Psoas muscle (tissue), 8 donors: ENCODE measurements at regions of chr6 and their contacts with region 1.

Region 1: GRCh38 chr6:138588805-138589434 is 89.6 kb upstream of the NHSL1 start:
- DNase-seq: peak in 1 of 2 donors; percentile 28
- ATAC-seq: peak; percentile 62 to 85 (median 70)
- H3K4me3 ChIP-seq: no peak overlapping the region
- H3K27ac ChIP-seq: no peak overlapping the region
- H3K4me1 ChIP-seq: no peaks in the 10 kb centered on the region
- H3K27me3 ChIP-seq: no peaks in the 10 kb centered on the region
- CTCF ChIP-seq: peak; percentile 93

Region 2: GRCh38 chr6:138001750-138002349 is 587.1 kb before region 1 on chr6:
- intact Hi-C with region 1: loop called in 1 of 2 experiments (anchors 10 kb)
- DNase-seq: peak in 1 of 2 donors; percentile 28
- ATAC-seq: peak in 2 of 4 donors; percentile 55 to 70
- H3K4me3 ChIP-seq: no peak overlapping the region
- H3K27ac ChIP-seq: no peak overlapping the region
- H3K4me1 ChIP-seq: no peaks in the 10 kb centered on the region
- H3K27me3 ChIP-seq: no peaks in the 10 kb centered on the region
- CTCF ChIP-seq: peak; percentile 81

Region 3: GRCh38 chr6:138428944-138429598 is 159.8 kb before region 1 on chr6:
- intact Hi-C with region 1: loop called (anchors 2 to 10 kb)
- DNase-seq: no peak
- ATAC-seq: peak in 2 of 4 donors; percentile 55 to 69
- H3K4me3 ChIP-seq: no peak overlapping the region
- H3K27ac ChIP-seq: no peak overlapping the region
- H3K4me1 ChIP-seq: no peaks in the 10 kb centered on the region
- H3K27me3 ChIP-seq: peaks cover 0 to 1% (median 0%) of the 10 kb centered on the region in 3 donors
- CTCF ChIP-seq: peak; percentile 51

Region 4: GRCh38 chr6:138692058-138692977 is 103.4 kb after region 1 on chr6:
- intact Hi-C with region 1: loop called in 1 of 2 experiments (anchors 5 kb)
- DNase-seq: peak; percentile 77 to 88
- ATAC-seq: peak; percentile 78 to 95 (median 86)
- H3K4me3 ChIP-seq: peak overlapping the region; percentile 78
- H3K27ac ChIP-seq: peak overlapping the region; percentile 2
- H3K4me1 ChIP-seq: no peaks in the 10 kb centered on the region
- H3K27me3 ChIP-seq: no peaks in the 10 kb centered on the region
- CTCF ChIP-seq: peak; percentile 85

Region 5: DNA sequence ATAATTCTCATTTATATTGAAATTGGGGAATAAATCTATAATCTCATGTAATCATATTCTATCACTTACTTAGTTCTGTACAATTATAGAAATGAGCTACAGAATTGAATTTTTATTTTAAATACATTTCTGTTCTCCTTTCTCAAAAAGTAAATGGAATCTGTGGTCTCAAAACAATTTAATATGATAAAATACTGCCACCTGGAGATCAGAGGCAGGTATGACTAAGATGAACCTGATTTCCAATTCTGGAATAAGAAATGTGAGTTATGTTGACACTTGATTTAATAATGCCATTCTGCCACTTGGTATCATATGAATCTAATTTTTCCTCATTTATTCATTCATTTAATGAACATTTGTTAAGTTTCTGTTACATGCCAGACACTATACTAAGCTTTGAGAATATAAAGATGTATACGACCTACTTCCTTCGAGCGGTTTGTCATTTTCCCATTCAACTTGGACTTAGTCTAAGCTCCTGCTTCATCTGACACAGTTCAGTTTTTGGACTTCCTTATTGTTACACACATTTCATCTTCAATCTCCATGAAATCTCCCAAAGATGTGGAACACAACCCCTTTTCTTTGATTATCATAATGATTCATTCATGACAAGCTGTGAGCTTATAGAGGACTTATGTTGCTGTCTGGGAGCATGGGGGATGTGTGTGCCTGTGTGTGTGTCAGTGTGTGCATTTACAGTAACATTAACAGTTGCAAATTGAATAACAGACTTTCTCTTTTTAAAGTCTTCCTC is 177.2 kb after region 1 on chr6:
- intact Hi-C with region 1: loop called (anchors 2 kb)
- DNase-seq: no peak
- ATAC-seq: peak in 1 of 4 donors; percentile 59
- H3K4me3 ChIP-seq: no peak overlapping the region
- H3K27ac ChIP-seq: no peak overlapping the region
- H3K4me1 ChIP-seq: no peaks in the 10 kb centered on the region
- H3K27me3 ChIP-seq: no peaks in the 10 kb centered on the region
- CTCF ChIP-seq: peak; percentile 68